ENCODE measurements at regions of chr7 and their contacts with region 1.

Region 1: DNA sequence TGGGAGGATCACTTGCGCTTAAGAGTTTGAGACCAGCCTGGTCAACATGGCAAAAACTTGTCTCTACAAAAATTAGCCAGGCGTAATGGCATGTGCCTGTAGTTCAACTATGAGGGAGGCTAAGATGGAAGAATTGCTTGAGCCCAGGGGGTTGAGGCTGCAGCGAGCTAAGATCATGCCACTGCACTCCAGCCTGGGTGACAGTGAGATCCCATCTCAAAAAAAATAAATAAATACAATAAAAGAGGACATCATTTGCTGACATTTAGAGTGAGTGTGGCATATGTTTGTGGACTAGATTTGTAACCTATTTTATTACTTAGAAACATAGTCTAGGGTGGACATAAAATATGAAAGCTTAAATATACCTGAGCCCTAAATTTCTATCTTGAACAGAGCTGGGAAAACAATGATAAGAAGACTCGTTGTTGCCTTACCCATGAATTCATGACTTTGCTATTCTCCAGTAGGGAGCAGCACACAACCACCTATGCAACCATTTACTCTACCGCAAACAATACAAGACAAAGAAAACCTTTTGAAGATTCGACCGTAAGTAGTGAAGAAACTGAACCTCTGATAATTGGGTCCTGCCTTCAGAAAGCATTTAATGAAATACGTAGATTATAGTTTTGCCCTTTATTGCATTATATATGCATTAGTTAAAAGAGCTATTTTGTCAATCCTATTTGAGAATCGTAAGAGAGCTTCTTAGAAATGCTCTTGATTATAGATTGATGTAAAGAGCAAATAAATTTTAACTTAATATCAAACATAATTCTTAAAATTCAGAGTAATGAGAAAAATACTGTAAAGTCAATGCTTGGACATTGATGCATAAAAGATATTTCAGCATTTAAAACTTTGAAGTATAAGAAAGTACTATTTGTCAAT is 83.5 kb downstream of the GNAT3 start:
- DNase-seq: peak; percentile 79
- H3K4me3 Mint-ChIP-seq: no peak overlapping the region
- H3K27ac Mint-ChIP-seq: no peak overlapping the region
- H3K4me1 Mint-ChIP-seq: peaks cover 7% of the 10 kb centered on the region
- H3K27me3 Mint-ChIP-seq: no peaks in the 10 kb centered on the region
- CTCF ChIP-seq: peak; percentile 69

Region 2: DNA sequence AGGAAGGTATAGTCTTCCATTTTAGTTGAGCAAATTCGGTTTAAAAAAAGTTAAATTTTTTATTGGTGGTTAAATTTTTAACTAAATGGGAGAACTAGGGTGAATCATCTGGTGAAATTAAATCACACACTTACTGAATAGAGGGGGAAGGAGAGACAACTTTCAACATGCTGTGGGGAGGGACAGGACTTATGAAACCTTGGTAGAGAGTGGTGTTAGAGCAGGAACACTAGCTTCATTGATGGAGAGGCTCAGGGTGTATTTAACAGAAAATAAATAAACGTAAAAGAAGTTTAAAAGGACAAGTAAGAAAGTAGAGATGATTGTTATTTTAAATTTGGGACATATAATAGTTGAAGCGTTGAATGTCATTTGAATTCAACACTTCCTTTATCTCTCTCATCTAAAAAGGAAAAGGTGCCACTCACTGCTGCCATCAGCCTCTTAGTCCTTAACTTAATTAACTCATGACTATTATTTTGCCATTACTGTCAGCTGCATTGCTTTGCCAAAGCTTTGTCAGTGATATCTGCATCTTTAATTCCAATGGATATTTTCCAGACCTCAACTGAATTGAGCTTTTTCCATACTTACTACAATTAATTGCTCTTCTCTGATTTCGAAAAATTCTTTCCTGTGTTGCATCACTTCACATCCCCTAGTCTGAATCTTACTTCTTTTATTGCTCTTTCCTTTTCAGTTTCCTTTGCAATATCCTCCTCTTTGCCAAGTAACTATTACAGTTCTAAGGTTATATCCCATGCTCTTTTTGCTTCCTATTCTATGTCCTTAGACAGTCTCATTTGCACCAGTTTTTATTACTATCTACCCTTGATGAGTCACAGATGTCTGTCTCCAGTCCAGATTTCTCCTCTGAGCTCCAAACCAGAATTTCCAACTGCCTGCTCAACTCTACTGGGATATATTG is 11.8 kb after region 1 on chr7:
- CTCF ChIA-PET with region 1: interaction called, 30 read pairs
- POLR2A ChIA-PET with region 1: interaction called, 4 read pairs
- intact Hi-C with region 1: no loop called
- DNase-seq: peak; percentile 46
- H3K4me3 Mint-ChIP-seq: no peak overlapping the region
- H3K27ac Mint-ChIP-seq: no peak overlapping the region
- H3K4me1 Mint-ChIP-seq: peaks cover 14% of the 10 kb centered on the region
- H3K27me3 Mint-ChIP-seq: no peaks in the 10 kb centered on the region
- CTCF ChIP-seq: no peak

Region 3: GRCh38 chr7:80453699-80454340 is 25.4 kb after region 1 on chr7:
- CTCF ChIA-PET with region 1: interaction called, 13 read pairs
- POLR2A ChIA-PET with region 1: interaction called, 3 read pairs
- intact Hi-C with region 1: loop called (anchors 1 kb)
- DNase-seq: peak; percentile 43
- H3K4me3 Mint-ChIP-seq: no peak overlapping the region
- H3K27ac Mint-ChIP-seq: no peak overlapping the region
- H3K4me1 Mint-ChIP-seq: peaks cover 4% of the 10 kb centered on the region
- H3K27me3 Mint-ChIP-seq: no peaks in the 10 kb centered on the region
- CTCF ChIP-seq: peak; percentile 52

Region 4: DNA sequence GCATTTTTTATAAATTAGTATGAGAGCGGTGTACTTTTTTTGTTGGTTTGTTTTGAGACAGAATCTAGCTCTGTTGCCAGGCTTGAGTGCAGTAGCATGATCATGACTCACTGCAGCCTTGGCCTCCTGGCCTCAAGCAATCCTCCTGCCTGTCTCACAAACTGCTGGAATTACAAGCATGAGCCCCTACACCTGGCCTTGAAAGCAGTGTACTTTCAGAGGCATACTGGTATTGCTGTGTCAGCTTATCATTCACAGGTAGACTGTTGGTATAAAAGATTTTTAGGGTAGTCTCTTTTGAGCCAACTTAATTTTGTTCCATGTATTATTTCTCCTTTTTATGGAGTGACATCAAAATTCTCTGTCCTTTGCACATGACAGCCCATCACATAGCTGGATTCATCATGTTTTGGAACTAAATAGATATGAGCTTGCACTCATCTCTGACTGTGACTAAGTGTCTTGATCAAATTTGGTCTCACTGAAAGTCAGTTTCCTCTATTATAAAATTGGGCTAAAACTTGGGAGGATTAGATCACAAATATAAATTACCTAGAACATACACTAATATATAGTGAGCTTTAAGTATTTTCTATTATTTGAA is 71.0 kb after region 1 on chr7:
- CTCF ChIA-PET with region 1: interaction called, 4 read pairs
- POLR2A ChIA-PET with region 1: interaction called, 3 read pairs
- intact Hi-C with region 1: loop called (anchors 2 kb)
- DNase-seq: peak; percentile 85
- H3K4me3 Mint-ChIP-seq: peak overlapping the region; percentile 52
- H3K27ac Mint-ChIP-seq: peak overlapping the region; percentile 94
- H3K4me1 Mint-ChIP-seq: peaks cover 17% of the 10 kb centered on the region
- H3K27me3 Mint-ChIP-seq: no peaks in the 10 kb centered on the region
- CTCF ChIP-seq: no peak

Region 5: DNA sequence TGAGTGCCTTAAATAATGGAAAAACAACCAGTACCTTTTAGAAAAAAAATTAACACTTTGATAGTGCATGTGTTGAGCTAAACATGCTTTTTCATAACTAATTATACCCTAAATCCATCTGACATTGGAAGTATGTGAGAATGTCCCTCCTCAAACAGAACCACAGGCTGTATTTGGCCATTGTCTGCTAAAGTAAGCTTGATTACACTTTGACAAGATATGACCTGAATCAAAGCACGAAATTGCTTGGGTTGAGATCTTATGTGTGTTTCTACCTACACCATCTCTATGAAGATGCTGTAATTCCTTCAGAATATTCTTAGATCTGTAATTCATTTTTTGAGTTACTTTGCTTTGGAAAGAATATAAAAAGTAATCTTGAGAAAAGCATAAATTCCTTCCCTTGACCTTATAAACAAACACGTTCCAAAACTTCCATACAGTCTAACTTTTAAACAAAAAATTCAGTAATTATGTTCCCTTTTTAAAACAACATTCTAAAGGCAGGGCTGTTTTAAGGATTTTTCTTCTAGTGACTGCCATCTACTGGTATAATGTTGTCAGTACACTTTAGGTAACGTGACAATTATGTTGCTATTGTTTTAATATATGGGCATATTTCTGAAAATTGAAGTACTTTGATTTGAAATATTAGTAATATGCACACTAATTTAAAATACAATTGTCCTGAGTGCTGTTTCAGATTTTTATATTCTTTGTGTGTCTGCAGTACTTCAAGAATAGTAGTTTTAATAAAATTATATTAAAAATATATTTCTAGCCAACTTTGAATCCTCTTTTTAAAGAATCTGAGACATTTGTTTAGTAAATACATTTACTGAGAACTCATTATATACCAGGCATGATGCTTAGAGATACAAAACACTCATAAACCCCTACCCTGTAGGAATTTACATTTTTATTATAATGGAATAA is 231.0 kb after region 1 on chr7:
- CTCF ChIA-PET with region 1: interaction called, 77 read pairs
- POLR2A ChIA-PET with region 1: interaction called, 5 read pairs
- intact Hi-C with region 1: loop called (anchors 1 kb)
- DNase-seq: peak; percentile 56
- H3K4me3 Mint-ChIP-seq: no peak overlapping the region
- H3K27ac Mint-ChIP-seq: no peak overlapping the region
- H3K4me1 Mint-ChIP-seq: no peaks in the 10 kb centered on the region
- H3K27me3 Mint-ChIP-seq: no peaks in the 10 kb centered on the region
- CTCF ChIP-seq: peak; percentile 45

Region 6: DNA sequence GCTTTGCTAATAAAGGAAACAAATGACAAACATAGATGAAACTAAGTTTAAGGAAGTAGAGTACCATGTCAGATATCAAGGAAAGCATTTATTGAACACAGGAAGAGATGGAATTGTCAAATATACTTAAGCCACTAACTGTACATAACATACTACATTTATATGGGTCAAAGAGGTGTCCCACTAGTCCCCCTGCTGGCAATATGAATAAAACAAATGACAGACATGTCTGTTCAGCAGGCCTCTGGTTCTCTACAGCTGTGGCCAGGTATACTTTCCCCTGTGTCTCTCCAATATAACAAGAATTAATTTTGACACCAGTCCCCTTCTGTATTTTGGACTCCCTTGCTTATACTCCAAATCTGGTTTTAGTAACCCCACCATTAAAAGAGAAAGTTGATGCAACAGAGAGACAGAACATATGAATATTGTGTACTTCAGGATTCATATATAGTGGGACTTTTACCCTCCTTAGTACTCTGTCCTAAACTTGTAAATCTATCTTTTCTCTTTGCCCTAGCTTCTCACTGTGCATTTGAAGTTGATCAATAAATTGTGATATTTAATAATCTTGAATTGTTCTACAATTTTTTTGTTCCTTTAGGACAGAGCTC is 253.0 kb after region 1 on chr7:
- CTCF ChIA-PET with region 1: interaction called, 95 read pairs
- POLR2A ChIA-PET with region 1: interaction called, 4 read pairs
- intact Hi-C with region 1: loop called (anchors 1 kb)
- DNase-seq: peak; percentile 58
- H3K4me3 Mint-ChIP-seq: no peak overlapping the region
- H3K27ac Mint-ChIP-seq: no peak overlapping the region
- H3K4me1 Mint-ChIP-seq: no peaks in the 10 kb centered on the region
- H3K27me3 Mint-ChIP-seq: no peaks in the 10 kb centered on the region
- CTCF ChIP-seq: peak; percentile 39

Region 7: GRCh38 chr7:80766724-80767123 is 338.3 kb after region 1 on chr7:
- CTCF ChIA-PET with region 1: no interaction called
- POLR2A ChIA-PET with region 1: no interaction called
- intact Hi-C with region 1: no loop called
- DNase-seq: no peak
- H3K4me3 Mint-ChIP-seq: no peak overlapping the region
- H3K27ac Mint-ChIP-seq: no peak overlapping the region
- H3K4me1 Mint-ChIP-seq: peaks cover 4% of the 10 kb centered on the region
- H3K27me3 Mint-ChIP-seq: no peaks in the 10 kb centered on the region
- CTCF ChIP-seq: no peak

Region 8: GRCh38 chr7:81469869-81470723 is 1041.7 kb after region 1 on chr7:
- CTCF ChIA-PET with region 1: interaction called, 9 read pairs
- POLR2A ChIA-PET with region 1: no interaction called
- intact Hi-C with region 1: loop called (anchors 1 kb)
- DNase-seq: peak; percentile 73
- H3K4me3 Mint-ChIP-seq: no peak overlapping the region
- H3K27ac Mint-ChIP-seq: no peak overlapping the region
- H3K4me1 Mint-ChIP-seq: peaks cover 7% of the 10 kb centered on the region
- H3K27me3 Mint-ChIP-seq: no peaks in the 10 kb centered on the region
- CTCF ChIP-seq: peak; percentile 65